Left lung (tissue), 14 donors: ENCODE measurements at regions of chr17 and their contacts with region 1.

Region 1: DNA sequence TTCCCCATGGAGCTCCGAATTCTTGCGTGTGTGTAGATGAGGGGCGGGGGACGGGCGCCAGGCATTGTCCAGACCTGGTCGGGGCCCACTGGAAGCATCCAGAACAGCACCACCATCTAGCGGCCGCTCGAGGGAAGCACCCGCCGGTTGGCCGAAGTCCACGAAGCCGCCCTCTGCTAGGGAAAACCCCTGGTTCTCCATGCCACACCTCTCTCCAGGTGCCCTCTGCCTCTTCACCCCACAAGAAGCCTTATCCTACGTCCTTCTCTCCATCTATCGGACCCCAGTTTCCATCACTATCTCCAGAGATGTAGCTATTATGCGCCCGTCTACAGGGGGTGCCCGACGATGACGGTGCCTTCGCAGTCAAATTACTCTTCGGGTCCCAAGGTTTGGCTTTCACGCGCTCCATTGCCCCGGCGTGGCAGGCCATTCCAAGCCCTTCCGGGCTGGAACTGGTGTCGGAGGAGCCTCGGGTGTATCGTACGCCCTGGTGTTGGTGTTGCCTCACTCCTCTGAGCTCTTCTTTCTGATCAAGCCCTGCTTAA is 617 bp upstream of the SENP3 start:
- DNase-seq: peak; percentile 85 to 97 (median 92)
- ATAC-seq: peak; percentile 78
- H3K4me3 ChIP-seq: peak overlapping the region; percentile 82 to 83
- H3K27ac ChIP-seq: peak overlapping the region; percentile 93 to 97
- H3K4me1 ChIP-seq: peaks cover 44 to 75% of the 10 kb centered on the region in 2 donors
- H3K27me3 ChIP-seq: no peaks in the 10 kb centered on the region
- CTCF ChIP-seq: peak; percentile 79 to 86

Region 2: DNA sequence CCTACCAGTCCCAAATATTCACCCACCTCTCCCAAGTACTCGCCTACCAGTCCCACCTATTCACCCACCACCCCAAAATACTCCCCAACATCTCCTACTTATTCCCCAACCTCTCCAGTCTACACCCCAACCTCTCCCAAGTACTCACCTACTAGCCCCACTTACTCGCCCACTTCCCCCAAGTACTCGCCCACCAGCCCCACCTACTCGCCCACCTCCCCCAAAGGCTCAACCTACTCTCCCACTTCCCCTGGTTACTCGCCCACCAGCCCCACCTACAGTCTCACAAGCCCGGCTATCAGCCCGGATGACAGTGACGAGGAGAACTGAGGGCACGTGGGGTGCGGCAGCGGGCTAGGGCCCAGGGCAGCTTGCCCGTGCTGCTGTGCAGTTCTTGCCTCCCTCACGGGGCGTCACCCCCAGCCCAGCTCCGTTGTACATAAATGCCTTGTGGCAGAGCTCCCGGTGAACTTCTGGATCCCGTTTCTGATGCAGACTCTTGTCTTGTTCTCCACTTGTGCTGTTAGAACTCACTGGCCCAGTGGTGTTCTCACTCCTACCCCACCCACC is 47.2 kb before region 1 on chr17:
- intact Hi-C with region 1: loop called in 1 of 2 experiments (anchors 5 kb)
- DNase-seq: no peak
- ATAC-seq: no peak
- H3K4me3 ChIP-seq: no peak overlapping the region
- H3K27ac ChIP-seq: no peak overlapping the region
- H3K4me1 ChIP-seq: peaks cover 4 to 16% of the 10 kb centered on the region in 2 donors
- H3K27me3 ChIP-seq: no peaks in the 10 kb centered on the region
- CTCF ChIP-seq: no peak